CD4-positive, alpha-beta T cell (primary cell): ENCODE measurements at regions of chr11 and their contacts with region 1.

Region 1: DNA sequence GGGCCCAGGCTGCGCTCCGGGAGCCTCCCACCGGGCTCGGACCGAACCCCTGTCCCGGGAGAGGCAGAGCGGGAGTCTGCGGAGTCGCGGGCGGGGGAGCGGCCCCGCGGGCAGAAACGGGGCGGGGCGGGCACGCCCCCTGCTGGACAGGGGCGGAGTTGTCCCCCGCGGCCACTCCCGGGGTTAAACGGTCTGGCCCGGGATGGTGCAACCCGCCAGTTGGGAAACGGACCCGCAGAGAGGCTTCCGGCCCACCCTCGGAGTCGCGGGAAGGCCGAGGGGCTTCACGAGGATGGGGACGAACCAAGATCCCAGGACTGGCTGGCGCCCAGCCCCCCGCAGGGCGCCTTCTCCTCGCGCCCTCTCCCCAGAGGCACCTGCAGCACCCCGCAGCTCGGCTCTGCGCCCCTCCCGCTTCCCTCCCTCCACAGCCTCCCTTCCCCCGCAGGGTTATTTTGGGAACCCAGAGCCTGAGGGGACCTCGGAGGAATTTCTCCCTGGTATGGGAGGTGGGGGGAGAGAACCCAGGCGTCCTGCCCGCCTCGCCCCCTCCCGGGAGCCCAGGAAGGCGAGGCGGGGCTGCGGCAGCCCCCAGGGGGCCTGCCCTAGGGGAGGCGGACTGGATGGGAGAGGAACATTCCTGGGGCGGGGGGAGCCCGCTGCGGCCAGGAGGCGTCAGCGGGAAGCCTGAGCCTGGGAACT is 902 bp downstream of the RASGRP2 start:
- DNase-seq: peak; percentile 58 to 87 (median 72)
- ATAC-seq: peak; percentile 13
- H3K4me3 ChIP-seq: peak overlapping the region; percentile 98
- H3K4me3 Mint-ChIP-seq: peak overlapping the region; percentile 85
- H3K27ac ChIP-seq: peak overlapping the region; percentile 89 to 95
- H3K27ac Mint-ChIP-seq: peak overlapping the region; percentile 92
- H3K4me1 ChIP-seq: peaks cover 67% of the 10 kb centered on the region
- H3K4me1 Mint-ChIP-seq: peaks cover 46% of the 10 kb centered on the region
- H3K27me3 ChIP-seq: no peaks in the 10 kb centered on the region
- H3K27me3 Mint-ChIP-seq: no peaks in the 10 kb centered on the region
- CTCF ChIP-seq: peak; percentile 80

Region 2: GRCh38 chr11:64419818-64420485 is 323.1 kb before region 1 on chr11:
- CTCF ChIA-PET with region 1: no interaction called
- POLR2A ChIA-PET with region 1: no interaction called
- intact Hi-C with region 1: no loop called
- DNase-seq: no peak
- ATAC-seq: no peak
- H3K4me3 ChIP-seq: no peak overlapping the region
- H3K4me3 Mint-ChIP-seq: no peak overlapping the region
- H3K27ac ChIP-seq: no peak overlapping the region
- H3K27ac Mint-ChIP-seq: no peak overlapping the region
- H3K4me1 ChIP-seq: peaks cover 4% of the 10 kb centered on the region
- H3K4me1 Mint-ChIP-seq: no peaks in the 10 kb centered on the region
- H3K27me3 ChIP-seq: no peaks in the 10 kb centered on the region
- H3K27me3 Mint-ChIP-seq: no peaks in the 10 kb centered on the region
- CTCF ChIP-seq: no peak

Region 3: DNA sequence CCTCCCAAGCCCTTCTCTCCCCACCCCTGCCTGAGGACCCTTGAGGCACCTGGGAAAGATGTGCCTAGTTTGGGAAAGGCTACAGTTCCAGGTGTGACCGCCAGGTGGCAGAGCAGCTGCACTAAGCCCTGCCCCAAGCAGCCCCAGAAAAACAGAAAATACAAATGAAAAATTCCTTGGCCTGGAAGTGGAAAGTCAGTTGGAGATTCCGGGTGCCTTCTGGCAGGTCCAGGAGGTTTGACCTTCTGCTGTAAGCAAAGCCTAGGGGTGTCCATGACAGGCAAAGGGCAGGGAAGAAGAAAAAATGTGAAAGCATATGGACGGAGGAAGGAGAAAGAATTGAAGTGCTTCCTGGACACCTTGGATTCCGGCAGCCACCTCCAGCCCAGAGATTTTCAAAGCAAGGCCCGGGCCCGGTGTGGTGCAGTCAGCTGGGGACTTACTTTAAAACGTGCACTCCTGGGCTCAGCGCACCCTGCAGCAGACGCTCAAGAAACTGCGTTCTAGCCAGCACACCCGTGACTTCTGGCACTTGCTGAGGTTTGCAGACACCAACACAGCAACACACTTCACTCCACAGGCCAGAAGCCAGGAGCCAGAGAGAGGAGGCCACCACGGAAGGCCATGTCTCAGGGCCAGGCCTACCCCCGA is 189.4 kb before region 1 on chr11:
- CTCF ChIA-PET with region 1: no interaction called
- POLR2A ChIA-PET with region 1: no interaction called
- intact Hi-C with region 1: loop called in 1 of 2 experiments (anchors 1 kb)
- DNase-seq: peak; percentile 27 to 71 (median 46)
- ATAC-seq: peak; percentile 48
- H3K4me3 ChIP-seq: no peak overlapping the region
- H3K4me3 Mint-ChIP-seq: no peak overlapping the region
- H3K27ac ChIP-seq: no peak overlapping the region
- H3K27ac Mint-ChIP-seq: no peak overlapping the region
- H3K4me1 ChIP-seq: no peaks in the 10 kb centered on the region
- H3K4me1 Mint-ChIP-seq: no peaks in the 10 kb centered on the region
- H3K27me3 ChIP-seq: no peaks in the 10 kb centered on the region
- H3K27me3 Mint-ChIP-seq: no peaks in the 10 kb centered on the region
- CTCF ChIP-seq: peak; percentile 93

Region 4: DNA sequence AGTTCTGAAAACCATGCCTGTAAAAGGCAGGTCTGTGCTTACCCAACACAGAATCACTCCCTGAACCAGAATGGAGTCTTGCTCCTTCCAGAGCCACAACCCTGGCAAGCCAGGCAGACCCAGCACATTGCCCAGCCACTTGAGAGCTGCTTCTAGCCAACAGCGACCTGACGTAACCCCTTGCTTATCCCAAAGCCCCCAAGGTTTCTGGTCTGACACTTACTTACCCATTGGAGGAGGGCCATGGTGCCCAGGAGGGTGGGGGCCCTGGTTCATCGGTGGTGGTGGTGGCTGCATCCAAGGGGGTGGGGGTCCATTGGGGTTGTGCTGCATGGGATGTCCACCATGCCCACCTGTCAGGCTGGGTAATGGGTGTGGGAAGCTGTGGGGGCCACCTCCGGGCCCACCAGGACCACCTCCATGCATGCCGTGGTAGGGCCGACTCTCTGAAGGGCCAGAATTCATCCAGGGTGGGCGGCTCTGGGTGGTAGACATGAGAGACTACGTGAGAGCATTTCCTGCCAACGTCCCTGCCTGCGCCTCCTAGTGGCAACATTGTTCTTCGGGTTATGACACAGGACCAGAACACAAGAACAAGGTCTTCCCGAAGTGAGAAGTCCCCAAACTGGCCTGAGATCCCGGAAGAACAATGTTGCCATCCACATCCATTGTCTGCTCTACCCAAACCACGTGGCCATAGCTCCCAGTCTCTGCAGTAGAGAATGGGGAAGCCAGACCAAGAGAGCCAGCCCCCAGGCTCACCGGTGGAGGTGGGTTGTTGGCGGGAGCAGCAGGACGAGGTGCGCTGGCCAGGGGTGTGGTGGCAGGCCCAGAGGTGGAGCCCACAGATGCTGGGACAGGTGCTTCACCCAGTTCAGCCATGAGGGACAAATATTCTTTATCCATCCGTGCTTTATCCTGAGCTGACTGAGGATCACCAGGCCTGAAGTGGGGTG is 24.6 kb after region 1 on chr11:
- CTCF ChIA-PET with region 1: interaction called, 45 read pairs
- POLR2A ChIA-PET with region 1: interaction called, 634 read pairs
- intact Hi-C with region 1: loop called (anchors 1 kb)
- DNase-seq: peak; percentile 65 to 91 (median 82)
- ATAC-seq: peak; percentile 24
- H3K4me3 ChIP-seq: no peak overlapping the region
- H3K4me3 Mint-ChIP-seq: peak overlapping the region; percentile 84
- H3K27ac ChIP-seq: peak overlapping the region; percentile 65 to 72
- H3K27ac Mint-ChIP-seq: peak overlapping the region; percentile 85
- H3K4me1 ChIP-seq: peaks cover 92% of the 10 kb centered on the region
- H3K4me1 Mint-ChIP-seq: peaks cover 87% of the 10 kb centered on the region
- H3K27me3 ChIP-seq: no peaks in the 10 kb centered on the region
- H3K27me3 Mint-ChIP-seq: no peaks in the 10 kb centered on the region
- CTCF ChIP-seq: peak; percentile 74

Region 5: GRCh38 chr11:64803163-64803845 is 60.3 kb after region 1 on chr11 and contains the start of gene MAP4K2:
- CTCF ChIA-PET with region 1: interaction called, 3 read pairs
- POLR2A ChIA-PET with region 1: interaction called, 22 read pairs
- intact Hi-C with region 1: no loop called
- DNase-seq: peak; percentile 67 to 97 (median 83)
- ATAC-seq: peak; percentile 86
- H3K4me3 ChIP-seq: peak within 1 kb of the TSS; percentile 85
- H3K4me3 Mint-ChIP-seq: peak within 1 kb of the TSS; percentile 91
- H3K27ac ChIP-seq: peak within 1 kb of the TSS; percentile 86 to 95
- H3K27ac Mint-ChIP-seq: peak within 1 kb of the TSS; percentile 91
- H3K4me1 ChIP-seq: peaks cover 41% of the 10 kb centered on the region
- H3K4me1 Mint-ChIP-seq: peaks cover 38% of the 10 kb centered on the region
- H3K27me3 ChIP-seq: no peaks in the 10 kb centered on the region
- H3K27me3 Mint-ChIP-seq: no peaks in the 10 kb centered on the region
- CTCF ChIP-seq: no peak
- total RNA-seq, gene MAP4K2: 71.9 to 74.1 TPM

Region 6: DNA sequence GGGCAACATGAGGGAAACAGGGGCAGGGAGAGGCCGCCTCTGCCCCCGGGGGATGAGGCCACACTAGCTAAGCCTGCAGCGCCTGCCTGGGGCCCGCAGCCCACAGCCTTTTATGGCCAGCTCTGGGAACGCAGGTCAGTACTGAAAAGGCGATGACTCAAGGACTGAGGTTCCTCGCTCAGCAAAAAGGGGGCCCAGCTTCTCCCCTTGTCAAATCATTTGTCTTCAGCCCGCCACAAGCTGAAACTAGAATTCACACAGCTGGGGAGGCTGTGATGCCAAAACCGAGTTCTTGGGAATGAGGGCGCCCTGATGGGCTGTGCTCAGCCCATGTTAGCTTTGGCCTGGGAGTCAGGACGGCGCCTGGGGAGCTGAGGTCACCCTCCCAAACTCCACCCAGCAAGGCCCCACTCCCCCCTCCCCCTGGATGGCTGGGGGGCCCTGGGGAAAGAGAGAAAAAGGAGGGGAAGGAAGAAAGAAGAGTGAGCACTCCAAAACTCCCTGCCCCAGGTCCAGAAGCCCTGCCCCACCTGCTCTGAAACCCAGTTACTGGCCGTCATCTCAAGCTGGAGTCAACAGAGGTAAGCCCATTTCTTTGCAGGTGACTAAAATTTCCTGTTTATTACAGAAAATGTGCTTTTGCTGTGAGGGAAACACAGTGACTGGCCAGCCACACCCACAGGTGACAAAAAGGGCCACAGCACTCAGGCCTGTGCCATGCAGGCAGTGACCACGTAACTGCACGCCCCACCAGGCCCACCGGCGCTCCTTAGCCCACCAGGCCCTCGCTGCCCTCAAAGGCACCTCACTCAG is 121.6 kb after region 1 on chr11:
- CTCF ChIA-PET with region 1: interaction called, 4 read pairs
- POLR2A ChIA-PET with region 1: interaction called, 31 read pairs
- intact Hi-C with region 1: no loop called
- DNase-seq: peak in 4 of 14 experiments; percentile 43 to 66 (median 55)
- ATAC-seq: no peak
- H3K4me3 ChIP-seq: peak overlapping the region; percentile 47
- H3K4me3 Mint-ChIP-seq: peak overlapping the region; percentile 71
- H3K27ac ChIP-seq: peak overlapping the region; percentile 82 to 89
- H3K27ac Mint-ChIP-seq: peak overlapping the region; percentile 93
- H3K4me1 ChIP-seq: peaks cover 100% of the 10 kb centered on the region
- H3K4me1 Mint-ChIP-seq: peaks cover 92% of the 10 kb centered on the region
- H3K27me3 ChIP-seq: no peaks in the 10 kb centered on the region
- H3K27me3 Mint-ChIP-seq: no peaks in the 10 kb centered on the region
- CTCF ChIP-seq: no peak

Region 7: DNA sequence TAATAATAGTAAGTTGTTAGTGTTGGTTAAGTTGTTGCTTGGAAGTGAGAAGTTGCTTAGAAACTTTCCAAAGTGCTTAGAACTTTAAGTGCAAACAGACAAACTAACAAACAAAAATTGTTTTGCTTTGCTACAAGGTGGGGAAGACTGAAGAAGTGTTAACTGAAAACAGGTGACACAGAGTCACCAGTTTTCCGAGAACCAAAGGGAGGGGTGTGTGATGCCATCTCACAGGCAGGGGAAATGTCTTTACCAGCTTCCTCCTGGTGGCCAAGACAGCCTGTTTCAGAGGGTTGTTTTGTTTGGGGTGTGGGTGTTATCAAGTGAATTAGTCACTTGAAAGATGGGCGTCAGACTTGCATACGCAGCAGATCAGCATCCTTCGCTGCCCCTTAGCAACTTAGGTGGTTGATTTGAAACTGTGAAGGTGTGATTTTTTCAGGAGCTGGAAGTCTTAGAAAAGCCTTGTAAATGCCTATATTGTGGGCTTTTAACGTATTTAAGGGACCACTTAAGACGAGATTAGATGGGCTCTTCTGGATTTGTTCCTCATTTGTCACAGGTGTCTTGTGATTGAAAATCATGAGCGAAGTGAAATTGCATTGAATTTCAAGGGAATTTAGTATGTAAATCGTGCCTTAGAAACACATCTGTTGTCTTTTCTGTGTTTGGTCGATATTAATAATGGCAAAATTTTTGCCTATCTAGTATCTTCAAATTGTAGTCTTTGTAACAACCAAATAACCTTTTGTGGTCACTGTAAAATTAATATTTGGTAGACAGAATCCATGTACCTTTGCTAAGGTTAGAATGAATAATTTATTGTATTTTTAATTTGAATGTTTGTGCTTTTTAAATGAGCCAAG is 682.3 kb after region 1 on chr11:
- CTCF ChIA-PET with region 1: no interaction called
- POLR2A ChIA-PET with region 1: interaction called, 11 read pairs
- intact Hi-C with region 1: no loop called
- DNase-seq: peak; percentile 69 to 97 (median 80)
- ATAC-seq: peak; percentile 56
- H3K4me3 ChIP-seq: peak overlapping the region; percentile 86
- H3K4me3 Mint-ChIP-seq: peak overlapping the region; percentile 92
- H3K27ac ChIP-seq: peak overlapping the region; percentile 99
- H3K27ac Mint-ChIP-seq: peak overlapping the region; percentile 96
- H3K4me1 ChIP-seq: peaks cover 58% of the 10 kb centered on the region
- H3K4me1 Mint-ChIP-seq: peaks cover 70% of the 10 kb centered on the region
- H3K27me3 ChIP-seq: no peaks in the 10 kb centered on the region
- H3K27me3 Mint-ChIP-seq: no peaks in the 10 kb centered on the region
- CTCF ChIP-seq: peak; percentile 31